PC-3 (cell line): ENCODE measurements at regions of chr12 and their contacts with region 1.

Region 1: DNA sequence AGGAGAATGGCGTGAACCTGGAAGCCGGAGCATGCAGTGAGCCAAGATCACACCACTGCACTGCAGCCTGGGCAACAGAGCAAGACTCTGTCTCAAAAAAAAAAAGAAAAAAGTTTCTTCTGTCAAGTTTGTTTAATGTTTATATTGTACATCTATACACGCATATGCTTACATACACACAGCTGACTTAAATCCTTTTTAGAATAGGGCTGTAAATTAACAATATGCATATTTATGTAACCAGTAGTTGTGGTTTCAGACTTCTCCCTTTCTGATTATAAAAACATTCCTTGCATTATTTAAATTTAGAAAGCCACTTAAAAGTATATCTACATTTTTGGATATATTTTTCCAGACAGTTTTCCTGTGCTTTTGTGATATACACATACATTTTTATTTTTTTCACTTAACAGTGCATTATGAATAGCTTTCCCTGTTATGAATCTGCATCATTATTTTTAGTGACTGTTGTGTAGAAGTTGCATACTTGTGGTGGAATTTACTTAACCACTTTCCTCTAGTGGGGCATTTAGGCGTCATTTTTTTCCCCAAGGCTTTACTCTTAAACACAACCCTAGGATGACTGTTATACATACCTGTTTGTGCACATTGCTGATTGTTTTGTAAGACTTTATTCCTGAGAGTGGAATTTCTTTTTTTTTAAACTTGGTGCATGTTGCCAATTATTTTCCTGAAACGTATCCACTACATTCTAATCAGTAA is 29.4 kb downstream of the POLR3B start:
- DNase-seq: no peak
- ATAC-seq: no peak
- H3K4me3 ChIP-seq: no peak overlapping the region
- H3K27ac ChIP-seq: no peak overlapping the region
- H3K4me1 ChIP-seq: no peaks in the 10 kb centered on the region
- H3K27me3 ChIP-seq: no peaks in the 10 kb centered on the region
- CTCF ChIP-seq: no peak

Region 2: GRCh38 chr12:106309671-106310505 is 77.1 kb before region 1 on chr12:
- CTCF ChIA-PET with region 1: no interaction called
- POLR2A ChIA-PET with region 1: no interaction called
- intact Hi-C with region 1: no loop called
- DNase-seq: peak; percentile 37
- ATAC-seq: peak; percentile 20; the same call in 1 of the 2 replicates
- H3K4me3 ChIP-seq: no peak overlapping the region
- H3K27ac ChIP-seq: no peak overlapping the region
- H3K4me1 ChIP-seq: peaks cover 33% of the 10 kb centered on the region
- H3K27me3 ChIP-seq: no peaks in the 10 kb centered on the region
- CTCF ChIP-seq: no peak

Region 3: GRCh38 chr12:106493531-106493930 is 106.6 kb after region 1 on chr12:
- CTCF ChIA-PET with region 1: no interaction called
- POLR2A ChIA-PET with region 1: no interaction called
- intact Hi-C with region 1: loop called (anchors 10 kb)
- DNase-seq: no peak
- ATAC-seq: no peak
- H3K4me3 ChIP-seq: no peak overlapping the region
- H3K27ac ChIP-seq: no peak overlapping the region
- H3K4me1 ChIP-seq: no peaks in the 10 kb centered on the region
- H3K27me3 ChIP-seq: no peaks in the 10 kb centered on the region
- CTCF ChIP-seq: no peak

Region 4: DNA sequence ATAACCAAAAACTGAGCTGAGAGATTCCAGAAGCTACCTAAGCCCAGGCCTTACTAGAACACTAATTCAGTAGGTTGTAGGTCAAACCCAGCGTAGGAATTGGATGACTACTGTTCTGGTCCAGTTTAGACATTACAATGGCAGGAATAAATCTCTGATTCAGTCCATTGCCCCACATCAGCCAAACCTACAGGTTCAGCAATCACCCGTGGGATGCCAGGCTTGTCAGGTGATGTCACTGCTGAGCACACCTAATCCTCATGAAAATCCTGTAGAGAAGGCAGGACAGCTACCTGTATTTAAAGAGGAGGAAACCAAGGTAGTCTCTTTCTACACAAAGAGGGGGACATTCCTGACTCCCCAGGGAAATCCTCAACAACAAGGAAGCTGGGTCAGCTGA is 259.5 kb after region 1 on chr12:
- CTCF ChIA-PET with region 1: interaction called, 13 read pairs
- POLR2A ChIA-PET with region 1: no interaction called
- intact Hi-C with region 1: no loop called
- DNase-seq: no peak
- ATAC-seq: no peak
- H3K4me3 ChIP-seq: no peak overlapping the region
- H3K27ac ChIP-seq: no peak overlapping the region
- H3K4me1 ChIP-seq: peaks cover 6% of the 10 kb centered on the region; the same call in 1 of the 2 replicates
- H3K27me3 ChIP-seq: no peaks in the 10 kb centered on the region
- CTCF ChIP-seq: no peak

Region 5: GRCh38 chr12:106841510-106842302 is 454.7 kb after region 1 on chr12:
- CTCF ChIA-PET with region 1: interaction called, 5 read pairs
- POLR2A ChIA-PET with region 1: no interaction called
- intact Hi-C with region 1: loop called (anchors 1 kb)
- DNase-seq: peak; percentile 71
- ATAC-seq: peak; percentile 68
- H3K4me3 ChIP-seq: no peak overlapping the region
- H3K27ac ChIP-seq: no peak overlapping the region
- H3K4me1 ChIP-seq: peaks cover 25% of the 10 kb centered on the region
- H3K27me3 ChIP-seq: no peaks in the 10 kb centered on the region
- CTCF ChIP-seq: peak; percentile 91

Region 6: DNA sequence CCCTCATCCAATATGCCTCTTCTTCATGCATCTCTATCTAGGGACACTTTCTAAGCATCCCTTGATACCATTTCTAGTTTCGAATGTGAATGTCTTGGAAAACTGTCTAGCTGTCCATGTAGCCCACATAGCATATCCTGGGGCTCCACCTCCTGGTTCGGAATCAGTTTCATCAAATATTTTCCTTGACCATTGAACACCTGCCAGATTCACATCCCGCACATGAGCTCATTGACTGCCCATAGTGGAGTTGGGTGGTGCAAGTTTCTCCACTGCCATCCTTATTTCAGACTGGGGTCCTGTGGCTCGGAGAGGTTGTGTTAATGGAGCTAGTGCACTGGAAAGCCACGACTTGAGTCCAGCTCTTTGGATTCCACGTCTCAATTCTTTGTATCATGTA is 510.1 kb after region 1 on chr12:
- CTCF ChIA-PET with region 1: no interaction called
- POLR2A ChIA-PET with region 1: no interaction called
- intact Hi-C with region 1: loop called (anchors 1 kb)
- DNase-seq: peak; percentile 50
- ATAC-seq: peak; percentile 21; the same call in 1 of the 2 replicates
- H3K4me3 ChIP-seq: no peak overlapping the region
- H3K27ac ChIP-seq: no peak overlapping the region
- H3K4me1 ChIP-seq: no peaks in the 10 kb centered on the region
- H3K27me3 ChIP-seq: no peaks in the 10 kb centered on the region
- CTCF ChIP-seq: peak; percentile 48; the same call in 1 of the 2 replicates